ENCODE measurements at regions of chr1 and their contacts with region 1.

Region 1: GRCh38 chr1:100459358-100460114 is 78.4 kb upstream of the GPR88 start:
- DNase-seq: peak; percentile 73
- ATAC-seq: peak; percentile 80
- H3K4me3 ChIP-seq: no peak overlapping the region
- H3K4me3 Mint-ChIP-seq: no peak overlapping the region
- H3K27ac ChIP-seq: no peak overlapping the region
- H3K27ac Mint-ChIP-seq: peak overlapping the region; percentile 2
- H3K4me1 ChIP-seq: peaks cover 13 to 17% of the 10 kb centered on the region in 2 donors
- H3K4me1 Mint-ChIP-seq: peaks cover 18% of the 10 kb centered on the region
- H3K27me3 ChIP-seq: no peaks in the 10 kb centered on the region
- H3K27me3 Mint-ChIP-seq: no peaks in the 10 kb centered on the region
- CTCF ChIP-seq: peak; percentile 85

Region 2: GRCh38 chr1:100037927-100038659 is 421.4 kb before region 1 on chr1:
- CTCF ChIA-PET with region 1: interaction called, 4 read pairs
- POLR2A ChIA-PET with region 1: no interaction called
- intact Hi-C with region 1: loop called (anchors 10 kb)
- DNase-seq: peak; percentile 93
- ATAC-seq: peak; percentile 93
- H3K4me3 ChIP-seq: peak overlapping the region; percentile 87 to 99 (median 97)
- H3K4me3 Mint-ChIP-seq: peak overlapping the region; percentile 92
- H3K27ac ChIP-seq: peak overlapping the region; percentile 96 to 99
- H3K27ac Mint-ChIP-seq: peak overlapping the region; percentile 94
- H3K4me1 ChIP-seq: peaks cover 28 to 40% of the 10 kb centered on the region in 2 donors
- H3K4me1 Mint-ChIP-seq: peaks cover 42% of the 10 kb centered on the region
- H3K27me3 ChIP-seq: no peaks in the 10 kb centered on the region
- H3K27me3 Mint-ChIP-seq: no peaks in the 10 kb centered on the region
- CTCF ChIP-seq: no peak

Region 3: GRCh38 chr1:100277866-100278265 is 181.7 kb before region 1 on chr1:
- CTCF ChIA-PET with region 1: interaction called, 10 read pairs
- POLR2A ChIA-PET with region 1: no interaction called
- intact Hi-C with region 1: loop called (anchors 2 kb)
- DNase-seq: peak; percentile 22
- ATAC-seq: no peak
- H3K4me3 ChIP-seq: no peak overlapping the region
- H3K4me3 Mint-ChIP-seq: no peak overlapping the region
- H3K27ac ChIP-seq: no peak overlapping the region
- H3K27ac Mint-ChIP-seq: no peak overlapping the region
- H3K4me1 ChIP-seq: no peaks in the 10 kb centered on the region
- H3K4me1 Mint-ChIP-seq: no peaks in the 10 kb centered on the region
- H3K27me3 ChIP-seq: no peaks in the 10 kb centered on the region
- H3K27me3 Mint-ChIP-seq: no peaks in the 10 kb centered on the region
- CTCF ChIP-seq: no peak

Region 4: DNA sequence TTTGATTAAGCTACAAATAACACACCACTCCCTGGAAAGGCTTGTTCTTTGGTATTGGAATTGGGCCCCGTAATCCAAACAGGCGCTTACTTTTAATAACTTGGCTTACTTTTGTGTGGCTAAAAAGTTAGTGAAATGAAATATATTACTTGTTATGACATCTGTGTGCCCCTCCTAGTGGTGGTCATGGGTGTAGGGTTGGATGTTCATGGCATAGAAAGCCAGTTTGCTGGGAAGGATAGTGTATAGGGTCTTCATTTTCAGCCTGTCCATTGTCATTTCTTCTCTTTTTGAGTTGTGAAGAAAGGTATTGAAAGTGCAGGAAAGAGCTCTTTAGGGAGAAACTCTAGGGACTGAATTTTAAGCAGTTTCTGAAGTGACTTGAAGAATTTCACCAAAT is 101.3 kb before region 1 on chr1:
- CTCF ChIA-PET with region 1: interaction called, 13 read pairs
- POLR2A ChIA-PET with region 1: no interaction called
- intact Hi-C with region 1: loop called (anchors 2 kb)
- DNase-seq: peak; percentile 36
- ATAC-seq: peak; percentile 48
- H3K4me3 ChIP-seq: no peak overlapping the region
- H3K4me3 Mint-ChIP-seq: no peak overlapping the region
- H3K27ac ChIP-seq: peak overlapping the region in 1 of 2 donors; percentile 34
- H3K27ac Mint-ChIP-seq: peak overlapping the region; percentile 60
- H3K4me1 ChIP-seq: peaks cover 20 to 35% of the 10 kb centered on the region in 2 donors
- H3K4me1 Mint-ChIP-seq: peaks cover 78% of the 10 kb centered on the region
- H3K27me3 ChIP-seq: no peaks in the 10 kb centered on the region
- H3K27me3 Mint-ChIP-seq: no peaks in the 10 kb centered on the region
- CTCF ChIP-seq: peak; percentile 56

Region 5: DNA sequence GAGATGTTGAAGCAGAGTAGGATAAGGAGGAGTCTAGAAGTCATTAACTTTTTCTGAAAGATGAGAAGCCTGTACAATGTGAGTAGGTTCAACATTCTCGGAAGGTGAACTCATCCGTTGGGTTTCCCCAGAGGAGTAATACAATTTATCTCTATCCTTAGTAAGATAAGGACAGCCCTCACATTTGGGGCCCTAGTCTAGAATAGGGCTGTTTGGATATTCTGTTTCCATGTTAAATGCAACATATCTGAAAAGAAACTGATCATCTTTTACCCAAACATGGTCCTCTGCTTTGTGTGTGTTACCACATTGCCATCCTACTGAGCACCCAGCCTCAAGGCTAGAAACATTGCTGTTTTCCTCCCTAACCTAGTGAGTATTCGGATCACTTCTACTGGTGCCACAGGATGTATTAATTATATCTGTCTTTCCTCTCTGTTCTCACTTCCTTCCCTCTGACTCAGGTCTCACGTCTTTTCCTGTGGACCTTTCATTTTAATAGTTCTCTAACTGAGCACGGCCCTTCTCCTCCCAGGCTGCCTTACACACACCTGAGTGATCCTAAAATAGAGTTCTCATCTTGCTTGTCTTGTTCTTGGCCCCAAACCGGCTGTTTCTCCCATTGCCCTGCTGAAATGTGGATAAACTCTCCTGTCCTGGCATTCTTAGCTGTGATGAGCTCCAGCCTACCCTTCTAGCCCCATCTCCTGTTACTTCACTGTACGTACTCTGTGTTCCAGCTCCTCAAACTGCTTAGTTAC is 15.5 kb before region 1 on chr1:
- CTCF ChIA-PET with region 1: interaction called, 10 read pairs
- POLR2A ChIA-PET with region 1: no interaction called
- intact Hi-C with region 1: no loop called
- DNase-seq: peak; percentile 13
- ATAC-seq: peak; percentile 14
- H3K4me3 ChIP-seq: peak overlapping the region in 1 of 5 experiments; percentile 21
- H3K4me3 Mint-ChIP-seq: peak overlapping the region; percentile 72
- H3K27ac ChIP-seq: peak overlapping the region; percentile 8 to 57
- H3K27ac Mint-ChIP-seq: peak overlapping the region; percentile 76
- H3K4me1 ChIP-seq: peaks cover 13 to 21% of the 10 kb centered on the region in 2 donors
- H3K4me1 Mint-ChIP-seq: peaks cover 28% of the 10 kb centered on the region
- H3K27me3 ChIP-seq: no peaks in the 10 kb centered on the region
- H3K27me3 Mint-ChIP-seq: no peaks in the 10 kb centered on the region
- CTCF ChIP-seq: no peak

Measured in B cell (primary cell).